Stomach (tissue), 19 donors: ENCODE measurements at regions of chr11 and their contacts with region 1.

Region 1: DNA sequence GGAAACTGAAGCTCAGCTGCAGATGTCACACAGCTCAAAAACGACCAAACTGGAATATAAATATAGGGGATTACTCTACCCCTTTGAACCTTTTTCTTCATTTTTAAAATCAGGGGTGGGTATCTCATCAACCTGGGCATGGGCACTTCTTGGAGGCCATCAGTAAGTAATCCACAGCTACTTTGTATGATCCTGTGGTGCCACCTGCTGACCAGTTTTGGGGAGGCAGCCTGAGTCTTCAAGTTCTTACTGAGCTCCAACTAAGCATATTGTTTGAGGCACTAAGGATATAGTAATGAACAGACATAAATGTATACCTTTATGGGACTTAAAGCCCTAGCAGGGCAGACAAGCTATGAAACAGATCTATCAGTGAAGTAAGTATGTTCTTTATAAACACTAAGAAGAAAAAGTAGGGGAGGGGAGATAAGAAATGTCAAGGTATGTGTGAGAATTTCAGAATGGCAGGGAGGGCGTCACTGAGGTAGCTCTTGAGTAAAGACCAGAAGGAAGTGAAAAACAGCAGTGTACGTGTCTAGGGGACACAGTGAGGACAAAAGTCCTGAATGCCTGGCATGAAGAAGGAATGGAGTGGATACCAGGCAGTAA is 18.4 kb downstream of the TUB start:
- DNase-seq: peak; percentile 85 to 88
- H3K4me3 ChIP-seq: no peak overlapping the region
- H3K27ac ChIP-seq: no peak overlapping the region
- H3K4me1 ChIP-seq: no peaks in the 10 kb centered on the region
- H3K27me3 ChIP-seq: no peaks in the 10 kb centered on the region
- CTCF ChIP-seq: peak in 5 of 7 experiments; percentile 54 to 78 (median 74)
- EP300 ChIP-seq: no peak
- POLR2A ChIP-seq: no peak

Region 2: GRCh38 chr11:7846003-7846402 is 253.4 kb before region 1 on chr11:
- intact Hi-C with region 1: no loop called
- DNase-seq: no peak
- H3K4me3 ChIP-seq: no peak overlapping the region
- H3K27ac ChIP-seq: no peak overlapping the region
- H3K4me1 ChIP-seq: no peaks in the 10 kb centered on the region
- H3K27me3 ChIP-seq: no peaks in the 10 kb centered on the region
- CTCF ChIP-seq: no peak
- EP300 ChIP-seq: no peak
- POLR2A ChIP-seq: no peak

Region 3: DNA sequence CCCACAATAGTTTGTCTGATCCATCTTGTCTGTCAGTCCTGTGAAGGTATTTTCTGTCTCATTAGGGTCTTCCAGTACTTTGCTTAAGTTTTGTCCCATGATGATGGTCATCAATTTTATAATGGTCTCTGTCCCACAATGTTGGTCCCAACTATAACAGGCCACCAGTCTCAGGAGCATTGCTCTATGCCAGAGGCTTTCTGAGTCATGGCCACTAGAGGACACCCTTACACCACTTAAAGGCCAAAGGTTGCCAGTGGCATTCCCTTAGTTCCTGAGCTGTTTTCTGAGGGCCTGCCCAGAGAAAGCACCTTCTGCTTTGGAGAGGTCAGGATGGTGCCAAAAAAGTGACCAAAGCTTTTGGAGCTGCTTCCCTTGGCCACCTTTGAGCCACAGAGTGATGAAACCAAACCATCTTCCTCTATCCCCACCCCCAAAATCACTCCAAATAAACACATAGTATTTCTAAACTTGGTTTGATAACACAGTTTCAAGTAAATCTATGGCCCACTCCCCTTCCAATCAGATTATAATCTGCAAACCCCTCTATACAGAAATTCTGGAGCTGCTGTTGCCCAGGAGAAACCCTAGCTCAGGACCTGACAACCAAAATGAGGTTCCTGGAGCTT is 92.9 kb before region 1 on chr11:
- intact Hi-C with region 1: loop called (anchors 5 kb)
- DNase-seq: peak; percentile 46 to 86
- H3K4me3 ChIP-seq: no peak overlapping the region
- H3K27ac ChIP-seq: no peak overlapping the region
- H3K4me1 ChIP-seq: no peaks in the 10 kb centered on the region
- H3K27me3 ChIP-seq: no peaks in the 10 kb centered on the region
- CTCF ChIP-seq: peak in 5 of 7 experiments; percentile 55 to 73 (median 68)
- EP300 ChIP-seq: no peak
- POLR2A ChIP-seq: no peak

Region 4: DNA sequence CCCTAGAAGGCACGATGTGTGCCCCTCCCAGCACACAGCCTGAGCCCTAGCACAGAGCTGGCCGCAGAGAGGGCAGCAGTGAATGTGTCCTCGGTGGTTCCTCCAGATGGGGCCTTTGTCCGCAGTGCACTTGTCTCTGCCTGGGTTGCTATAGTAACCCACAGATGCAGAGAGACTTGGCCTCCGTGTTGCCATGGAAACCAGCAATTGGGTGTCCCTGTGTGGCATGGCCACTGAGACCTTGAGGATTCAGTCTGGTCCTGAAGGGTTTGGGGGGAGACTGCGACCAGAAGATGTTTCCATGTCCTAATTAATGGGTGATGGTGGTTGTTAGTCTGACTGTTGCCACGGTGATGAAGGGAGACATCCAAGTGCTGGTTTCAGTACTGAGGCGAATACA is 61.0 kb before region 1 on chr11:
- intact Hi-C with region 1: loop called (anchors 5 kb)
- DNase-seq: no peak
- H3K4me3 ChIP-seq: no peak overlapping the region
- H3K27ac ChIP-seq: no peak overlapping the region
- H3K4me1 ChIP-seq: peaks cover 1 to 4% (median 2%) of the 10 kb centered on the region in 4 donors
- H3K27me3 ChIP-seq: no peaks in the 10 kb centered on the region
- CTCF ChIP-seq: no peak
- EP300 ChIP-seq: no peak
- POLR2A ChIP-seq: no peak

Region 5: DNA sequence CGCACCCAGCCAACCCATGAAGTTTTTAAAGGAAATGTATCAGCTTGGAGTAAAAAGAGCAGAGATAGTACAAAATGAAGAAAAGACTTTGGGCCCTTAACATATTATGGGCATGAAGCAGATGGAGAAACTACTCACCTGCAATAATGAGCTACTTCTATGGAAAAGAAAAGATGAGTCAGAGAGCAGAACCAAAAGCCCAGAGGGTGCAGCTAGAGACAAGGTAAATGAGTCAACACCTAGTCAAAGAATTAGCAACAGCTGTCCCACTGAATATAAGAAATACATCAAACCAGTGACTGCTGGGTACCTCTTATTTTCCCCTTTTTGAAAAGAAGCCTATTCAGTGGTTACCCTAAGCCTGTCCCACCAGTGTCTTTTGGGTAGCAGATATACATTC is 645.0 kb after region 1 on chr11:
- intact Hi-C with region 1: no loop called
- DNase-seq: no peak
- H3K4me3 ChIP-seq: no peak overlapping the region
- H3K27ac ChIP-seq: no peak overlapping the region
- H3K4me1 ChIP-seq: peaks cover 0 to 59% (median 34%) of the 10 kb centered on the region in 4 donors
- H3K27me3 ChIP-seq: no peaks in the 10 kb centered on the region
- CTCF ChIP-seq: no peak
- EP300 ChIP-seq: no peak
- POLR2A ChIP-seq: no peak